B cell (primary cell): ENCODE measurements at regions of chr16 and their contacts with region 1.

Region 1: DNA sequence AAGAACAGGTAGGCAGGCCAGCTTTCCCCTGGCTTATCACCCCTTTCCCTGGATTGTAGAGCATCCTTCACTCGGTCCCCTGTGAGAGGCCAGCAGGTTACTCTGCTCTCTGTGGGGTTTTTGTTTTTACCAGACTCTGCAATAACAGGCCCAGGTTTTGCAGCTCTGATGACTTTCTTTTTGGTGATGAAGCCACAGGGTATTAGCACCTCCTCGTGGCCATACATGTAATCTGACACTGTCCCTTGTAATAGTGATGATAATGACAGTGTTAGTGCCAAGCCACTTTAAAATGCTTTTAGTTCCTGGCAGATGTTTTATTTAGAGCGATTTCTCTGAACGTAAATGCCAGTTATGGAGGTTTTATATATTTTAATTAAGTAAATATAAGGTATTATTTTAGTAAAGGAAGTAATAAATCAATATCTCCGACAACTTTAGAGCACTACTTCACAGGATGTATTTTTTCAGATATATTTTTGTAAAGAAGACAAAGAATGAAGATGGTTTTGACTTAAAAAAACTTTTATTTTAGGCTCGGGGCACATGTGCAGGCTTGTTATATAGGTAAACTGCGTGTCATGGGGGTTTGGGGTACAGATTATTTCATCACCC is 38.0 kb upstream of the CPHXL start:
- DNase-seq: peak; percentile 80
- ATAC-seq: peak; percentile 55
- H3K4me3 ChIP-seq: no peak overlapping the region
- H3K4me3 Mint-ChIP-seq: no peak overlapping the region
- H3K27ac ChIP-seq: no peak overlapping the region
- H3K27ac Mint-ChIP-seq: peak overlapping the region; percentile 75
- H3K4me1 ChIP-seq: peaks cover 14 to 23% of the 10 kb centered on the region in 2 donors
- H3K4me1 Mint-ChIP-seq: peaks cover 23% of the 10 kb centered on the region
- H3K27me3 ChIP-seq: no peaks in the 10 kb centered on the region
- H3K27me3 Mint-ChIP-seq: peaks cover 6% of the 10 kb centered on the region
- CTCF ChIP-seq: peak; percentile 86

Region 2: GRCh38 chr16:75148311-75149195 is 615.7 kb before region 1 on chr16 and contains the start of gene ZFP1:
- CTCF ChIA-PET with region 1: no interaction called
- POLR2A ChIA-PET with region 1: no interaction called
- intact Hi-C with region 1: loop called (anchors 5 kb)
- DNase-seq: peak; percentile 95
- ATAC-seq: peak; percentile 86
- H3K4me3 ChIP-seq: peak within 1 kb of the TSS; percentile 54 to 97 (median 95)
- H3K4me3 Mint-ChIP-seq: peak within 1 kb of the TSS; percentile 89
- H3K27ac ChIP-seq: peak within 1 kb of the TSS; percentile 86 to 90
- H3K27ac Mint-ChIP-seq: peak within 1 kb of the TSS; percentile 90
- H3K4me1 ChIP-seq: peaks cover 5 to 7% of the 10 kb centered on the region in 2 donors
- H3K4me1 Mint-ChIP-seq: peaks cover 20% of the 10 kb centered on the region
- H3K27me3 ChIP-seq: peaks cover 0 to 2% (median 0%) of the 10 kb centered on the region in 4 experiments
- H3K27me3 Mint-ChIP-seq: no peaks in the 10 kb centered on the region
- CTCF ChIP-seq: no peak
- total RNA-seq, gene ZFP1: 13.4 and 14.1 TPM in 2 replicates

Region 3: GRCh38 chr16:75379911-75380847 is 384.1 kb before region 1 on chr16:
- CTCF ChIA-PET with region 1: interaction called, 6 read pairs
- POLR2A ChIA-PET with region 1: no interaction called
- intact Hi-C with region 1: loop called (anchors 5 kb)
- DNase-seq: peak; percentile 87
- ATAC-seq: peak; percentile 98
- H3K4me3 ChIP-seq: no peak overlapping the region
- H3K4me3 Mint-ChIP-seq: peak overlapping the region; percentile 44
- H3K27ac ChIP-seq: no peak overlapping the region
- H3K27ac Mint-ChIP-seq: peak overlapping the region; percentile 57
- H3K4me1 ChIP-seq: peaks cover 23 to 41% of the 10 kb centered on the region in 2 donors
- H3K4me1 Mint-ChIP-seq: peaks cover 27% of the 10 kb centered on the region
- H3K27me3 ChIP-seq: peaks cover 10 to 79% (median 71%) of the 10 kb centered on the region in 4 experiments
- H3K27me3 Mint-ChIP-seq: peaks cover 77% of the 10 kb centered on the region
- CTCF ChIP-seq: no peak

Region 4: GRCh38 chr16:75471723-75472633 is 292.3 kb before region 1 on chr16:
- CTCF ChIA-PET with region 1: interaction called, 75 read pairs
- POLR2A ChIA-PET with region 1: no interaction called
- intact Hi-C with region 1: loop called (anchors 1 kb)
- DNase-seq: peak; percentile 61
- ATAC-seq: peak; percentile 87
- H3K4me3 ChIP-seq: no peak overlapping the region
- H3K4me3 Mint-ChIP-seq: no peak overlapping the region
- H3K27ac ChIP-seq: no peak overlapping the region
- H3K27ac Mint-ChIP-seq: no peak overlapping the region
- H3K4me1 ChIP-seq: peaks cover 0 to 8% of the 10 kb centered on the region in 2 donors
- H3K4me1 Mint-ChIP-seq: peaks cover 2% of the 10 kb centered on the region
- H3K27me3 ChIP-seq: no peaks in the 10 kb centered on the region
- H3K27me3 Mint-ChIP-seq: no peaks in the 10 kb centered on the region
- CTCF ChIP-seq: peak; percentile 78

Region 5: DNA sequence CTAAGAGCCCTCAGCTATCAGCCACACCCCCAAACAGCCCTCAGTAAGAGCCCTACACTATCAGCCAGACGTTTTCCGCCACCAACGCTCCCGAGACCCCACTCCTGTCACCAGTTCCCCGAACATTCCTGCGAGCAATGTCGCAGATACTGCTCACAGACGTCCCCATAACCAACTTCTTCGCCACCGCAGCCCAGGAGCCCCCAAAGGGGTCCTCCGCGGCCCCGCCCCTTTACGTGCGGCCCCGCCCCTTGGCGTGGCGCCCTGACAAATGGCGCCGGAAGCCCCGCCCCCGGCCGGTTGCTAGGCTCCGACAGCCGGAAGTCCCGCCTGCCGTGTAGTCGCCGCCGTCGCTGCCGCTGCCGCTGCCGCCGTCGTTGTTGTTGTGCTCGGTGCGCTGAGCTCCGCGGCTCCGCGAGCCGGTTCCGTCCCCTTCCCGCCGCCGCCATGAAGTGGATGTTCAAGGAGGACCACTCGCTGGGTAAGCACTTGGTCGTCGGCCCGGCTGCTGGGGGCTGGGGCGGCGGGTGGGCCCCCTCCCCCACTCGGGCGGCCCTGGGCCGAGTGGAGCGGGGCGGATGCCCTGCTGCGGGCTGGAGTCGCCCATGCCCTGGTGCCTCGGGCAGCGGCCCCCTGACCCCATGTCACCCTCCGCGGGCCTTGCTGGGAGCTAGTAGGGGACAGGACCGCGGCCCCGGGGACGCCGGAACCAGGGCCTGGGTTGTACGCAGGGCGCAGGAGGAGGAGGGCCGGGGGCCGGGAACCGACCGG is 198.0 kb before region 1 on chr16 and contains the start of gene GABARAPL2:
- CTCF ChIA-PET with region 1: interaction called, 9 read pairs
- POLR2A ChIA-PET with region 1: no interaction called
- intact Hi-C with region 1: loop called (anchors 2 kb)
- DNase-seq: peak; percentile 97
- ATAC-seq: peak; percentile 70
- H3K4me3 ChIP-seq: peak within 1 kb of the TSS; percentile 75 to 96 (median 95)
- H3K4me3 Mint-ChIP-seq: peak within 1 kb of the TSS; percentile 100
- H3K27ac ChIP-seq: peak within 1 kb of the TSS; percentile 96 to 99
- H3K27ac Mint-ChIP-seq: peak within 1 kb of the TSS; percentile 97
- H3K4me1 ChIP-seq: peaks cover 44 to 61% of the 10 kb centered on the region in 2 donors
- H3K4me1 Mint-ChIP-seq: peaks cover 53% of the 10 kb centered on the region
- H3K27me3 ChIP-seq: no peaks in the 10 kb centered on the region
- H3K27me3 Mint-ChIP-seq: no peaks in the 10 kb centered on the region
- CTCF ChIP-seq: no peak
- total RNA-seq, gene GABARAPL2: 84.8 and 84.9 TPM in 2 replicates

Region 6: DNA sequence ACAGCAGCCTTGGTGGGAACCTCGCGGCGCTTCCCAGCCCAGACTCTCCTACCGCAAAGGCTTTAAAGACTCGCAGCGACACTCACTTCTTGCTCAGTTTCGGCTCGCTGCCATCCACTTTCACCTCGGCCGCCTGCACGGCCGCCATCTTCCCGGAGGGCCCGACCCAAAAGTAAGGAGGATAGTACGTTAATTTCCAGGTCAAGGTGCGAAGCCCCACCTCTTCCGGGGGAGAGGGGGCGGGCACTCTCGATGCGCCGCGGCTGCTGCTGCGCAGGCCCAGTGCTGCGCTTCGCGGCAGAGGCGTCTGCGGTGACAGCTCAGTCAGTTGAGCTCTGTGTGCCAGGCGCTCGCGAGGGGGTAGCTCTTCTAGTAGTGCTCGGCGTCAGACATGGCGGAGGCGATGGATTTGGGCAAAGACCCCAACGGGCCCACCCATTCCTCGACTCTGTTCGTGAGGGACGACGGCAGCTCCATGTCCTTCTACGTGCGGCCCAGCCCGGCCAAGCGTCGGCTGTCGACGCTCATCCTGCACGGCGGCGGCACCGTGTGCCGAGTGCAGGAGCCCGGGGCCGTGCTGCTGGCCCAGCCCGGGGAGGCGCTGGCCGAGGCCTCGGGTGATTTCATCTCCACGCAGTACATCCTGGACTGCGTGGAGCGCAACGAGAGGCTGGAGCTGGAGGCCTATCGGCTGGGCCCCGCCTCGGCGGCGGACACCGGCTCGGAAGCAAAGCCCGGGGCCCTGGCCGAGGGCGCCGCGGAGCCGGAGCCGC is 116.6 kb before region 1 on chr16 and contains the starts of genes KARS1 and TERF2IP:
- CTCF ChIA-PET with region 1: interaction called, 60 read pairs
- POLR2A ChIA-PET with region 1: interaction called, 4 read pairs
- intact Hi-C with region 1: loop called (anchors 1 kb)
- DNase-seq: peak; percentile 96
- ATAC-seq: peak; percentile 85
- H3K4me3 ChIP-seq: peak within 1 kb of the TSS; percentile 73 to 96 (median 85)
- H3K4me3 Mint-ChIP-seq: peak within 1 kb of the TSS; percentile 97
- H3K27ac ChIP-seq: peak within 1 kb of the TSS; percentile 85 to 87
- H3K27ac Mint-ChIP-seq: peak within 1 kb of the TSS; percentile 99
- H3K4me1 ChIP-seq: peaks cover 54 to 55% of the 10 kb centered on the region in 2 donors
- H3K4me1 Mint-ChIP-seq: peaks cover 53% of the 10 kb centered on the region
- H3K27me3 ChIP-seq: no peaks in the 10 kb centered on the region
- H3K27me3 Mint-ChIP-seq: no peaks in the 10 kb centered on the region
- CTCF ChIP-seq: no peak
- total RNA-seq, gene KARS1: 102 and 114 TPM in 2 replicates
- total RNA-seq, gene TERF2IP: 74.6 and 75.2 TPM in 2 replicates